PC-3 (cell line): ENCODE measurements at regions of chr19 and their contacts with region 1.

Region 1: DNA sequence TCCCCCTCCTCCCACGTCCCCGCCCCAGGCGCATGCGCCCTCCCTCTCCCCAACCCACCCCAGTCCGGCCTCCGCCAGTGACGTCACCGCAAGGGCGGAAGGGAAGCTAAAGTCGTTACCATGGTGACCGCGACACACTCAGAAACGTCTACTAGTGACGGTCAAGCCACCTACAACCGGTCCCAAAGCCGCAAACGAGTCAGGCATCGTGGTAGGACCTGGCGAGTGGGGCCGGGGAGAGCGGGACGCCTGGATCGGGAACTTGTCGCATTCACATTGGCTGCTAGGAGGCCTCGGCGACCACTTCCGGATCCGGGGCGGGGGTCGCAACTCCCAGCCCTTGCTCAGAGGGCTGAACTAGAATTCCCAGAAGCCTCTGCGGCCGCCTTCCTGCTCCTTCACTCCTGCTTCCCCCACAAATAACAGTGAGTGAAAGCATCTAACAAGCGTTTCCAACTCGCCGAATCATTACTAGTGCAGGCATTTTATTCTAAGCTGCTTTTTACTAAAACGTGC is at the start of gene ZSCAN5A:
- DNase-seq: peak; percentile 97
- ATAC-seq: peak; percentile 81
- H3K4me3 ChIP-seq: peak within 1 kb of the TSS; percentile 72
- H3K27ac ChIP-seq: peak within 1 kb of the TSS; percentile 81
- H3K4me1 ChIP-seq: peaks cover 11% of the 10 kb centered on the region
- H3K27me3 ChIP-seq: peaks cover 3% of the 10 kb centered on the region; the same call in 1 of the 2 replicates
- CTCF ChIP-seq: no peak
- total RNA-seq, gene ZSCAN5A: 17.2 and 23.7 TPM in 2 replicates

Region 2: DNA sequence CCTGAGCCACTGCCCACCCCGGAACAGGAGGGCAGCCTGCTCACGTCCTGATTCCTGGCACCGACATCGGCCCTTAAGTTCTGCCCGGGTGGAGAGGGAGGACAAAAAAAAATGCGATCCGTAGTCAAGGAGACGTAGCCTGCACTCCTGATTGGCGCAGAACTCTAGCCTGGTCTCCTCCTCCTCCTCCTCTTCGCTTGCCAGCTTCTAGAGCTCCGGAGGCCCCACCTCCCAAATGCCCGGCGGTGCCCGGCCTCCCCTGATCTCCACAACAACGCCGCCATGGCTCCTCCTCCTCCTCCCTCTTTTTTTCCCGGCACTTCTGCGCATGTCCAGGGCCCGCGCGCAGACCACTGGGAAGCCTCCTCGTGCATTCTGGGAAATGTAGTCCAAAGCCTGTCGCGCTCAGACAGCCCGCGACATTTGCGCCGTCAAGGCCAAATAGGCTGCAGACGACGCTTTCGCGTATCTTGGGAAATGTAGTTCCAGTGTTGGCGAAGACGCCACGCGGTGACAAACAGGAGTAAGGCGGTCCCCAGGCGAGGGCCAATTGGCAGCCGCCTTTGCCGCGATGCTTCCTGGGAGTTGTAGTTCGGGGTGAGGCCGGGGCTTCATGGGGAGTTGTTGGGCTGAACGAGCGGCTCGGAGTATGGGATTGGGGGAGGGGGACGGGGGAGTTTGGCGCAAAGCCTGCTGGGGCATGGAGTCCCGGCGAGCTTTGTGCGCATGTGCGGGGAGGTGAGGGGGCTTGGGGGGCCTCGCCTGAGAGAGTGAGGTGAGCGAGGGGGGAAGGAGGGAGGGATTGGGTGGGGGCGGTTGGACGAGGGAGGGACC is 173.8 kb before region 1 on chr19 and contains the start of gene ZNF444:
- CTCF ChIA-PET with region 1: no interaction called
- POLR2A ChIA-PET with region 1: no interaction called
- intact Hi-C with region 1: loop called (anchors 1 kb)
- DNase-seq: peak; percentile 99
- ATAC-seq: peak; percentile 88
- H3K4me3 ChIP-seq: peak within 1 kb of the TSS; percentile 80
- H3K27ac ChIP-seq: peak within 1 kb of the TSS; percentile 41
- H3K4me1 ChIP-seq: peaks cover 21% of the 10 kb centered on the region
- H3K27me3 ChIP-seq: no peaks in the 10 kb centered on the region
- CTCF ChIP-seq: no peak
- total RNA-seq, gene ZNF444: 40.0 and 65.0 TPM in 2 replicates

Region 3: DNA sequence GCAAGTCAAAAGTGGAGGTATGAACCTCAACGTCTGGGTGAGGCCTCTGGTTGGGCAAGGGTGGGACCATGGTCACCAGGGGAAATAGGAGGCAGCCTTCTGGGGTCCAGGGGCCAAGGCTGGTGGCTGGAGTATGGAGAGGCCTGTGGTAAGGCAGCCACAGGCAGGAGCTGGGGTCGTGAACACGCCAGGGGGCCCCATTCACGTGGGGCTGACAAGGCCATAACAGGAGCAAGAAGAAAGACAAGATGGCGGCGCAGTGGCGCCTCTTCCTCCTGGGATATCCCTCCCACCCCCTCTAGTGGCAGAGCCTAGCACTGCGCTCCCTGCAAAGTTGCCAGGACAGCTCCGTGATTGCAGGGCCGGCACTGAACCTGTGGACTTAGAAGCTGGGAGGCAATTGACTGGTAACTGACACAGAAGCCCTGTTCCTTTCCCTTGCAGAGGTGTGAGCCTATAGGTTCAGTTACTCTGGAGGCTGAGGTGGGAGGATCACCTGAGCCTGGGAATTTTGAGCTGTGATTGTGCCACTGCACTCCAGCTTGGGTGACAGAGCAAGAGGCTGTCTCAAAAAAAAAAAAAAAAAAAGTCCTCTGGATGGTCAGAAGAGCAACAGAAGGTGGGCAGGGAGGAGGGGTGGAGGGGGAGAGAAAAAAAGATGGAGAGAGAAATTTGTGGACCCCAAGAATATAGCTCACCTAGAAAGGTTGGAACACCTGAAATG is 61.8 kb before region 1 on chr19:
- CTCF ChIA-PET with region 1: interaction called, 14 read pairs
- POLR2A ChIA-PET with region 1: interaction called, 4 read pairs
- intact Hi-C with region 1: no loop called
- DNase-seq: peak; percentile 73
- ATAC-seq: peak; percentile 67
- H3K4me3 ChIP-seq: no peak overlapping the region
- H3K27ac ChIP-seq: no peak overlapping the region
- H3K4me1 ChIP-seq: no peaks in the 10 kb centered on the region
- H3K27me3 ChIP-seq: no peaks in the 10 kb centered on the region
- CTCF ChIP-seq: peak; percentile 90

Region 4: GRCh38 chr19:56333505-56333904 is 18.9 kb after region 1 on chr19:
- CTCF ChIA-PET with region 1: interaction called, 26 read pairs
- POLR2A ChIA-PET with region 1: no interaction called
- intact Hi-C with region 1: no loop called
- DNase-seq: peak; percentile 87
- ATAC-seq: peak; percentile 88
- H3K4me3 ChIP-seq: no peak overlapping the region
- H3K27ac ChIP-seq: no peak overlapping the region
- H3K4me1 ChIP-seq: no peaks in the 10 kb centered on the region
- H3K27me3 ChIP-seq: peaks cover 4% of the 10 kb centered on the region; the same call in 1 of the 2 replicates
- CTCF ChIP-seq: peak; percentile 92